ENCODE measurements at regions of chr21 and their contacts with region 1.

Region 1: GRCh38 chr21:17819114-17819876 is at the start of gene C21orf91:
- DNase-seq: peak; percentile 80
- H3K4me3 Mint-ChIP-seq: peak within 1 kb of the TSS; percentile 82
- H3K27ac Mint-ChIP-seq: peak within 1 kb of the TSS; percentile 100
- H3K4me1 Mint-ChIP-seq: peaks cover 6% of the 10 kb centered on the region
- H3K27me3 Mint-ChIP-seq: no peaks in the 10 kb centered on the region
- CTCF ChIP-seq: no peak
- total RNA-seq, gene C21orf91: 21.0 and 22.1 TPM in 2 replicates

Region 2: DNA sequence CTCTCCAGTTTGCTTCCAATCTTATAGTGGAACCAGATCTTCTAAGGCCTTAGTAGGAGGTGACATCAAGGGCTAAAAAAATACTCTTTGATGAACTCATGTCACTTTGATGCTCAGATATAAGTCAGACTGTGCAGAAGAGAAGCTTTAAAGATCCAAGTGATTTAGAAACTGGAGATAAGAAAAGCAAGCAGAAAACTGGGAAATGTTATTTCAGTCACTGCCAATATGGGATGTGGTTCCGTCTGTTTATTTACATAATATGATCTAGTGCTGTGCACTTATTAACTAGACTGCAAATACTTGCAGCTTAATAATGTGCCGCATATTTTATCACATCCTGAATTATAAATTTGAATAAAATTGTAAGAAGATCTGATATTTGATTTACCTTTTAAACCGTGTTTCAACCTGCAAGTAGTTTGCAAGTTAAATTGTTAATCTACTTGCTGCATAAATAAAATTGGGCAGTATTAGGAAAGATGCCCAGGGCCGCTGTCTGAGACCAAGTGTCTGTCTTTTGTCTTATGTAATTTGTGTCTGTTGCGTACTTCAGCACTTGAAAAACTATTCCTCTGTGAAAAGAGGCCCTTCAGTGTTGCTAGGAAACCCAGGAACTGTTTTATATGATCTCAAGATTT is 276.8 kb before region 1 on chr21:
- CTCF ChIA-PET with region 1: no interaction called
- POLR2A ChIA-PET with region 1: no interaction called
- intact Hi-C with region 1: no loop called
- DNase-seq: no peak
- H3K4me3 Mint-ChIP-seq: no peak overlapping the region
- H3K27ac Mint-ChIP-seq: no peak overlapping the region
- H3K4me1 Mint-ChIP-seq: peaks cover 4% of the 10 kb centered on the region
- H3K27me3 Mint-ChIP-seq: no peaks in the 10 kb centered on the region
- CTCF ChIP-seq: no peak

Region 3: GRCh38 chr21:17611414-17612022 is 207.8 kb before region 1 on chr21:
- CTCF ChIA-PET with region 1: no interaction called
- POLR2A ChIA-PET with region 1: interaction called, 19 read pairs
- intact Hi-C with region 1: no loop called
- DNase-seq: peak; percentile 87
- H3K4me3 Mint-ChIP-seq: peak overlapping the region; percentile 89
- H3K27ac Mint-ChIP-seq: peak overlapping the region; percentile 93
- H3K4me1 Mint-ChIP-seq: peaks cover 10% of the 10 kb centered on the region
- H3K27me3 Mint-ChIP-seq: no peaks in the 10 kb centered on the region
- CTCF ChIP-seq: no peak

Region 4: DNA sequence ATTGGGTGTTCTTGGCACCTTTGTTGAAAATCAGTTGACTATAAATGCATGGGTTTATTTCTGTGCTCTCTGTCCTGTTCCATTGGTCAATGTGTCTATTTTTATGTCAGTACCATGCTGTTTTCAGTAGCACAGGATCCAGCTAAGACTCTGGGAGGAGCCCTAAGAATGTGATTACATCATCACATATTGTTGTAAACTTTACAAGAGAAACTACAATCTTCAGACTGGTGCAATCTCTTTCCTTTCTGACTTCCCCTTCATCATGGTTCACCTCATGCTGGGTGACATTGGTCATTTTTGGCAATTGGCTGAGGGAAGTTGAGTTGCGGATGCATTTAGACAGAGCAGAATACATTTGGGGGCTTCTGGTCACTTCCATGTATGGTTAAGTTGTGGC is 88.5 kb before region 1 on chr21:
- CTCF ChIA-PET with region 1: no interaction called
- POLR2A ChIA-PET with region 1: interaction called, 11 read pairs
- intact Hi-C with region 1: no loop called
- DNase-seq: peak; percentile 22
- H3K4me3 Mint-ChIP-seq: no peak overlapping the region
- H3K27ac Mint-ChIP-seq: no peak overlapping the region
- H3K4me1 Mint-ChIP-seq: peaks cover 15% of the 10 kb centered on the region
- H3K27me3 Mint-ChIP-seq: no peaks in the 10 kb centered on the region
- CTCF ChIP-seq: no peak

Region 5: DNA sequence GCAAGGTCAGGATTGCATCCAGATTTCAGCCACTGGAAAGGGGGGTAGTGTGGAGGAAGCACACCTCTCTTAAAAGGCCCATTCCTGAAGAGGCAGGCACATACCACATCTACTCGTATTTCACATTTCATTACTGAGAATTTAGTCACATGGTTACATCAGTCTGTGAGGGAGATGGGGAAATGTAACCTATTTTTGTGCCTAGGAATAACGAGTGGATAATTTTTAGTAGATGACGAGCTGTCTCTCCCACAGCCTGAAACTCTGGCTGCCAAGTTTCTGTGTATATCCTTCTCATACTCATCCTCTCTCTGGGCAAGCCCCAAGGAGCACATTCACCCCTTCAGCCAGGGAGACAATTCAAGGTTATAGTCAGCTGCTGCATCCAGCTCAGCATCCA is 10.2 kb after region 1 on chr21:
- CTCF ChIA-PET with region 1: interaction called, 4 read pairs
- POLR2A ChIA-PET with region 1: interaction called, 34 read pairs
- intact Hi-C with region 1: no loop called
- DNase-seq: peak; percentile 27
- H3K4me3 Mint-ChIP-seq: no peak overlapping the region
- H3K27ac Mint-ChIP-seq: no peak overlapping the region
- H3K4me1 Mint-ChIP-seq: peaks cover 9% of the 10 kb centered on the region
- H3K27me3 Mint-ChIP-seq: no peaks in the 10 kb centered on the region
- CTCF ChIP-seq: no peak

Region 6: GRCh38 chr21:17903029-17903806 is 83.9 kb after region 1 on chr21:
- CTCF ChIA-PET with region 1: interaction called, 18 read pairs
- POLR2A ChIA-PET with region 1: interaction called, 7 read pairs
- intact Hi-C with region 1: loop called (anchors 2 kb)
- DNase-seq: peak; percentile 45
- H3K4me3 Mint-ChIP-seq: no peak overlapping the region
- H3K27ac Mint-ChIP-seq: no peak overlapping the region
- H3K4me1 Mint-ChIP-seq: peaks cover 12% of the 10 kb centered on the region
- H3K27me3 Mint-ChIP-seq: no peaks in the 10 kb centered on the region
- CTCF ChIP-seq: peak; percentile 9

Region 7: GRCh38 chr21:18147678-18148077 is 328.4 kb after region 1 on chr21:
- CTCF ChIA-PET with region 1: no interaction called
- POLR2A ChIA-PET with region 1: no interaction called
- intact Hi-C with region 1: no loop called
- DNase-seq: peak; percentile 52
- H3K4me3 Mint-ChIP-seq: no peak overlapping the region
- H3K27ac Mint-ChIP-seq: no peak overlapping the region
- H3K4me1 Mint-ChIP-seq: peaks cover 11% of the 10 kb centered on the region
- H3K27me3 Mint-ChIP-seq: no peaks in the 10 kb centered on the region
- CTCF ChIP-seq: no peak